Aorta (tissue), 5 donors: ENCODE measurements at regions of chr4 and their contacts with region 1.

Region 1: GRCh38 chr4:81844717-81845116 is 373.0 kb upstream of the RASGEF1B start:
- DNase-seq: peak in 1 of 2 donors; percentile 79
- ATAC-seq: peak; percentile 91
- H3K4me3 ChIP-seq: no peak overlapping the region
- H3K27ac ChIP-seq: no peak overlapping the region
- H3K4me1 ChIP-seq: no peaks in the 10 kb centered on the region
- H3K27me3 ChIP-seq: no peaks in the 10 kb centered on the region

Region 2: GRCh38 chr4:81465395-81466340 is 379.0 kb before region 1 on chr4:
- intact Hi-C with region 1: loop called (anchors 2 kb)
- DNase-seq: no peak
- ATAC-seq: no peak
- H3K4me3 ChIP-seq: no peak overlapping the region
- H3K27ac ChIP-seq: no peak overlapping the region
- H3K4me1 ChIP-seq: peaks cover 0 to 5% of the 10 kb centered on the region in 2 donors
- H3K27me3 ChIP-seq: no peaks in the 10 kb centered on the region

Region 3: GRCh38 chr4:81509191-81509590 is 335.5 kb before region 1 on chr4:
- intact Hi-C with region 1: no loop called
- DNase-seq: no peak
- ATAC-seq: no peak
- H3K4me3 ChIP-seq: no peak overlapping the region
- H3K27ac ChIP-seq: no peak overlapping the region
- H3K4me1 ChIP-seq: no peaks in the 10 kb centered on the region
- H3K27me3 ChIP-seq: no peaks in the 10 kb centered on the region